ENCODE measurements at regions of chr1 and their contacts with region 1.

Region 1: GRCh38 chr1:39378377-39378776 is 113.1 kb upstream of the BMP8A start:
- DNase-seq: no peak
- ATAC-seq: peak; percentile 56 to 89 (median 84)
- H3K4me3 ChIP-seq: no peak overlapping the region
- H3K27ac ChIP-seq: no peak overlapping the region
- H3K4me1 ChIP-seq: no peaks in the 10 kb centered on the region
- H3K27me3 ChIP-seq: no peaks in the 10 kb centered on the region
- CTCF ChIP-seq: peak in 2 of 4 donors; percentile 24 to 39

Region 2: DNA sequence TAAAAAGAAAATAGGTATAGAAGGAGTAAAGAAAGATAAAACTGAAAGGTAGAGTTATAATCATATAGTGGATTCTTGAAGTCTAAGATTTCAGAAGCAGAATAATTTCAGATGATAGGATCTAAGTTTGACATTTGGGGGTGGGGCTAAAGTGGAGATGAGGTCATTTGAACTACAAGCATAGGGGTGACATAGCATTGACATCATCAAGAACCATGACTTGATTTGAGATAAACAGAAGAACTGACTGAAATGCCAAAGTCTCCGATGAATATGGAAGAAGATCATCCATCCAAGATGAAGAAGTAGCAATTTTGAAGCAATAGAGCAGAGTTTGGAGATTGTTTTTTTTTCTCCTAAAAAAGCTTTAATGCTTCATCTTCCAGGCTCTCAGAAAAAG is 51.5 kb before region 1 on chr1:
- intact Hi-C with region 1: loop called in 1 of 3 experiments (anchors 10 kb)
- DNase-seq: no peak
- ATAC-seq: no peak
- H3K4me3 ChIP-seq: no peak overlapping the region
- H3K27ac ChIP-seq: no peak overlapping the region
- H3K4me1 ChIP-seq: no peaks in the 10 kb centered on the region
- H3K27me3 ChIP-seq: no peaks in the 10 kb centered on the region
- CTCF ChIP-seq: no peak